ENCODE measurements at regions of chr6 and their contacts with region 1.

Region 1: GRCh38 chr6:150068720-150069648 is at the start of gene ULBP3:
- DNase-seq: peak; percentile 75
- H3K4me3 ChIP-seq: peak within 1 kb of the TSS; percentile 69
- H3K27ac ChIP-seq: no peak within 1 kb of the TSS
- H3K4me1 ChIP-seq: no peaks in the 10 kb centered on the region
- CTCF ChIP-seq: peak; percentile 67
- total RNA-seq, gene ULBP3: 3.5 and 4.5 TPM in 2 replicates

Region 2: GRCh38 chr6:150079604-150080003 is 10.6 kb after region 1 on chr6:
- CTCF ChIA-PET with region 1: interaction called, 10 read pairs
- POLR2A ChIA-PET with region 1: no interaction called
- intact Hi-C with region 1: no loop called
- DNase-seq: peak; percentile 24
- H3K4me3 ChIP-seq: no peak overlapping the region
- H3K27ac ChIP-seq: no peak overlapping the region
- H3K4me1 ChIP-seq: no peaks in the 10 kb centered on the region
- CTCF ChIP-seq: no peak

Region 3: GRCh38 chr6:150800674-150801314 is 731.8 kb after region 1 on chr6:
- CTCF ChIA-PET with region 1: no interaction called
- POLR2A ChIA-PET with region 1: no interaction called
- intact Hi-C with region 1: no loop called
- DNase-seq: no peak
- H3K4me3 ChIP-seq: no peak overlapping the region
- H3K27ac ChIP-seq: no peak overlapping the region
- H3K4me1 ChIP-seq: no peaks in the 10 kb centered on the region
- CTCF ChIP-seq: no peak

Measured in OCI-LY7 (cell line).